ENCODE measurements at regions of chr4 and their contacts with region 1.

Region 1: DNA sequence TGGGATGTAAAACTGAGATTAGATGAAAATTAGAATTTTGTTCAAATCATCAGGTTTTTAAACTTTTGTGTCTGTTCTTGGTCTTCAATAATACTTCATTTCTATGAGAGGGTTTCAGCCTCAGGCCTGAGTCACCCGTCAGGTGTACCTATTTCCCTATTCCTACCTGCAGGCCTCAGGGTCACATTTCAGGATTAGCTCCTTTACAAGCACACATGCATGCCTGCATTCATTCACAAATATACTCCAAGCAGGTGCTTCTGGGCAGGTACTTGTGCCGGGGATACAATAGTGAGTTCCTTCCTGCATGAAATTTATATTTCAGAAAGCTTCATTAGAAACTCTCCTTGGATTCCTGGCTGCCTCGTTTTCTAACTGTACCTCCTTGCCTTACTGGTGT is 114.9 kb downstream of the SHISA3 start:
- DNase-seq: no peak
- ATAC-seq: no peak
- H3K4me3 ChIP-seq: no peak overlapping the region
- H3K27ac ChIP-seq: no peak overlapping the region
- H3K4me1 ChIP-seq: peaks cover 9% of the 10 kb centered on the region
- H3K27me3 ChIP-seq: no peaks in the 10 kb centered on the region
- CTCF ChIP-seq: no peak
- EP300 ChIP-seq: no peak
- POLR2A ChIP-seq: no peak
- RAD21 ChIP-seq: no peak

Region 2: GRCh38 chr4:42501624-42502401 is 10.4 kb before region 1 on chr4:
- CTCF ChIA-PET with region 1: no interaction called
- POLR2A ChIA-PET with region 1: no interaction called
- RAD21 ChIA-PET with region 1: no interaction called
- SMC1A ChIA-PET with region 1: interaction called, 30 read pairs
- in situ Hi-C with region 1: no loop called
- intact Hi-C with region 1: no loop called
- DNase-seq: no peak
- ATAC-seq: no peak
- H3K4me3 ChIP-seq: no peak overlapping the region
- H3K27ac ChIP-seq: no peak overlapping the region
- H3K4me1 ChIP-seq: no peaks in the 10 kb centered on the region
- H3K27me3 ChIP-seq: no peaks in the 10 kb centered on the region
- CTCF ChIP-seq: no peak
- EP300 ChIP-seq: no peak
- POLR2A ChIP-seq: no peak
- RAD21 ChIP-seq: no peak

Measured in GM12878 (cell line).